Activated CD4-positive, alpha-beta memory T cell treated with anti-CD3 and anti-CD28 coated beads, Interleukin-2, amount 10 ng/mL, durations not matched to agents 7 days and 5 days (primary cell): ENCODE measurements at regions of chr6 and their contacts with region 1.

Region 1: GRCh38 chr6:14728396-14729024 is 517.4 kb upstream of the JARID2 start:
- DNase-seq: no peak
- H3K4me3 Mint-ChIP-seq: no peak overlapping the region
- H3K27ac Mint-ChIP-seq: no peak overlapping the region
- H3K4me1 Mint-ChIP-seq: peaks cover 71% of the 10 kb centered on the region
- H3K27me3 Mint-ChIP-seq: no peaks in the 10 kb centered on the region

Region 2: GRCh38 chr6:14717307-14717706 is 11.2 kb before region 1 on chr6:
- CTCF ChIA-PET with region 1: interaction called, 6 read pairs
- POLR2A ChIA-PET with region 1: interaction called, 10 read pairs
- DNase-seq: peak; percentile 32
- H3K4me3 Mint-ChIP-seq: no peak overlapping the region
- H3K27ac Mint-ChIP-seq: peak overlapping the region; percentile 30
- H3K4me1 Mint-ChIP-seq: peaks cover 50% of the 10 kb centered on the region
- H3K27me3 Mint-ChIP-seq: no peaks in the 10 kb centered on the region

Region 3: GRCh38 chr6:14799928-14800327 is 71.4 kb after region 1 on chr6:
- CTCF ChIA-PET with region 1: no interaction called
- POLR2A ChIA-PET with region 1: no interaction called
- DNase-seq: peak; percentile 22
- H3K4me3 Mint-ChIP-seq: no peak overlapping the region
- H3K27ac Mint-ChIP-seq: no peak overlapping the region
- H3K4me1 Mint-ChIP-seq: no peaks in the 10 kb centered on the region
- H3K27me3 Mint-ChIP-seq: no peaks in the 10 kb centered on the region